Activated CD4-positive, alpha-beta memory T cell treated with anti-CD3 and anti-CD28 coated beads, Interleukin-2, amount 10 ng/mL, durations not matched to agents 7 days and 5 days (primary cell): ENCODE measurements at regions of chr6 and their contacts with region 1.

Region 1: DNA sequence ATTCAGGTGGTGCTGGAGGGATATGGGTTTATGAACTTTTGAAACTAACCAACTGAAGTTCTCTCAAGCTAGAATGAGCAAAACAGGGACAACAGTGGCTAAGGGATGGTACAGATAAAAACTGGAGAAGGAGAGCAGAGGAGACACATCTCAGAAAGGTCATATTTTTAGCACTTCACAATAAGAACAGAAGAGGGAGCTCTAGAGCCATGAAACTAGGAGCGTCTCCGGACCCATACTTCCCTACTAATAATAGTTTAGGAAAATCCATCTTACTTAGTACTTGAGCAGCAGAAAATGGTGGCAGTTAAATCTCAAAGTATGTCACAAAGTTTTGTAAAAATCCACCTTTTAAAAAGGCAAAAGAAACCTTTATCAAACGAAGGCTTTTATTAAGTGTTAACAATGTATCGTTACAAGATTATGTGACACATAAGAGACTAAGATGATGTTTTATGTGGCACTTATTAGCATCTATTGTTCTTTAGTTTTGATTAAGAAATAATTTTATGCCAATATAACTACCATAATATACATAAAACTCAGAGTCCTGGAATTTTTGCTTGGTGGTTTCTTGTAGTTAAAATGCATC is 278.6 kb downstream of the TBC1D32 start:
- DNase-seq: no peak
- H3K4me3 Mint-ChIP-seq: no peak overlapping the region
- H3K27ac Mint-ChIP-seq: no peak overlapping the region
- H3K4me1 Mint-ChIP-seq: no peaks in the 10 kb centered on the region
- H3K27me3 Mint-ChIP-seq: no peaks in the 10 kb centered on the region

Region 2: GRCh38 chr6:121305957-121306607 is 250.4 kb after region 1 on chr6:
- CTCF ChIA-PET with region 1: interaction called, 29 read pairs
- POLR2A ChIA-PET with region 1: no interaction called
- DNase-seq: no peak
- H3K4me3 Mint-ChIP-seq: no peak overlapping the region
- H3K27ac Mint-ChIP-seq: no peak overlapping the region
- H3K4me1 Mint-ChIP-seq: peaks cover 5% of the 10 kb centered on the region
- H3K27me3 Mint-ChIP-seq: no peaks in the 10 kb centered on the region